ENCODE measurements at regions of chr11 and their contacts with region 1.

Region 1: DNA sequence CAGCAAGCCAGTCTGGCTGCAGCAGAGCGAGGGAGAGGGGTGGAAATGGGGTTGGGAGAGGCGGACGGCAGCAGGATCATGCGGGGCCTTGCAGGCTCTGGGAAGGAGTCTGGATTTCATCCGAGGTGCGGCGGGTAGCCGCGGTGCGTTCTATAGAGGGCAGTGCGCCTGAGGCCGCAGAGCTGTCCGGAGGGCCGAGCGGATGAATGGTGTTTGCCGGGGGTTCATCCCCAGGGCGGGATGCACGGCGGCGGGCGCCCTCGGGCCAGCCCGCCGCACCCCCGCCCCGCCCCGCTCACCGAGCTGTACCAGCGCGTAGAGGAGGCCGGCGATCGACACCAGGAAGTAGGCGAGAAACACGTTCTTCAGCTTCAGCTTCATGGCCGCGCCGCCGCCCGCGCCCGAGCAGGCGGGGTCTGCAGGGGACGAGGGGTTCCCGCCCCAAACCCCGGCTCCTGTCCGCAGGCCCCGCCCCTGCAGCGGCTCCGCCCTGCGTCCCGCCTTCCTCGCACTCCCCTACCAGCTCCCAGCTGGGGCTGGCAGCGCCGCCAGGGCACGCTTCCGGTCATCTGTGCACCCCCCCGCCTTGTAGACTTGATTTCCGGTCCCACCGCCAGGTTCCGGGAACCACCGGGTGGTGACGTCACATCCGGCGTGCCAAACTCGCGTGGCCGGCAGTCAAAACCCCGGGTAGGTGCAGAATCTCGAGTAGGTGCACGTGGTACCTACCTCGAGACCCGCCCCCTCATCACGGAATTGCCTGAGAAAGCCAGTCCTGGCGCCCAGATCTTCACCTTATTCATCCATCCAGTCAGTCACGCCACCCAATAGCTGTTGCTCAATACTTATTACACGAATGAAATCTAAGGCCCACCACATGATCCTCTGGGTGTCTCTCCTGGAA is at the start of gene B3GAT3:
- DNase-seq: peak; percentile 98
- ATAC-seq: peak; percentile 98
- H3K4me3 ChIP-seq: peak within 1 kb of the TSS; percentile 84
- H3K27ac ChIP-seq: peak within 1 kb of the TSS; percentile 81
- H3K4me1 ChIP-seq: 0 out of 2 replicates have a peak, but pooled peaks cover 4% of the 10 kb centered on the region
- H3K27me3 ChIP-seq: no peaks in the 10 kb centered on the region
- CTCF ChIP-seq: no peak
- EP300 ChIP-seq: peak in 1 of 2 experiments; percentile 27; a peak in 1 of 4 replicates
- POLR2A ChIP-seq: peak; percentile 84
- RAD21 ChIP-seq: no peak
- polyA plus RNA-seq, gene B3GAT3: 0.31 to 2.8 TPM

Region 2: DNA sequence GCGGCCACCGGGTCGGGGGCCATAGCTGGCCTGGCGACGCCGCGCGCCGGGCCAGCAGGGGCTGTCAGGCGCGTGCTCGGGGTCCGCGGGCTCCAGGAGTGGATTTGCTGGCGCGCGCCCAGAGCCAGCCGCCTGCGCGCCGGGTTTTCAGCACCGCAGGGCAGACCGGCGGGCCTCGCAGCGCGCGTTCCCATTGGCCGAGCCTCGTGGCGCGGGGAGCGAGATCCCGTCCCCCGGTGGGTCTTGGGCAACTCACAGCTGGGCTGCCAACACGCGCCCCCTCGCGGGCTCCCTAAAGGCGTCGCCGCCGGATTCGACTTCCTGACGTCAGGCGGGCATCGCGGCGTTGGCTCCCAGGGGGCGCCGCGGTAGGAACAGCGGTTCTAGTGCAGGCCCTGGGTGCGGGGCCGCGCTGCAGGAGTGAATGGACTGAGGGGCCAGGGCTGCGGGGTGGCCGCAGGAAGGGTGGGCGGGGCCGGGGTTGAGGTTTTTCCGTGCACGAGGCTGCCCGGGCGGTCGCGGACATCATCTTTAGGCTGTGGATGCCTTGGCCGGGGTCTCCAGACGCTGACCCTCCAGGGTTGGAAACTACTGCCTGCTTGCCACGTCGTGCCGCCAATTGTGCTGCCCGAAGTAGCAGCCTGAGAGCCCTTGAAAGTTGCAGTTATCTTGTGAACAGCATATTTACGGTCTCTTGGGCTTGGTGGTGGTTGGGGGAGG is 804.9 kb before region 1 on chr11 and contains the start of gene FADS1:
- CTCF ChIA-PET with region 1: no interaction called
- POLR2A ChIA-PET with region 1: no interaction called
- RAD21 ChIA-PET with region 1: no interaction called
- SMC1A ChIA-PET with region 1: no interaction called
- in situ Hi-C with region 1: no loop called
- intact Hi-C with region 1: no loop called
- DNase-seq: peak; percentile 60
- ATAC-seq: peak; percentile 71
- H3K4me3 ChIP-seq: peak within 1 kb of the TSS; percentile 81
- H3K27ac ChIP-seq: peak within 1 kb of the TSS; percentile 87
- H3K4me1 ChIP-seq: peaks cover 3% of the 10 kb centered on the region; the same call in 1 of the 2 replicates
- H3K27me3 ChIP-seq: no peaks in the 10 kb centered on the region
- CTCF ChIP-seq: peak; percentile 53 to 73 (median 69)
- EP300 ChIP-seq: no peak
- POLR2A ChIP-seq: peak; percentile 60
- RAD21 ChIP-seq: no peak
- polyA plus RNA-seq, gene FADS1: 8.8 to 14.6 TPM

Region 3: GRCh38 chr11:62645956-62646824 is 24.4 kb after region 1 on chr11 and contains the start of gene GANAB:
- CTCF ChIA-PET with region 1: interaction called, 3 read pairs
- POLR2A ChIA-PET with region 1: interaction called, 9 read pairs
- RAD21 ChIA-PET with region 1: interaction called, 3 read pairs
- SMC1A ChIA-PET with region 1: interaction called, 3 read pairs
- in situ Hi-C with region 1: no loop called
- intact Hi-C with region 1: loop called (anchors 2 kb)
- DNase-seq: peak; percentile 82
- ATAC-seq: peak; percentile 99
- H3K4me3 ChIP-seq: peak within 1 kb of the TSS; percentile 98
- H3K27ac ChIP-seq: peak within 1 kb of the TSS; percentile 93
- H3K4me1 ChIP-seq: peaks cover 4% of the 10 kb centered on the region; the same call in 1 of the 2 replicates
- H3K27me3 ChIP-seq: no peaks in the 10 kb centered on the region
- CTCF ChIP-seq: no peak
- EP300 ChIP-seq: no peak
- POLR2A ChIP-seq: peak; percentile 94
- RAD21 ChIP-seq: no peak
- polyA plus RNA-seq, gene GANAB: 4.5 to 6.4 TPM

Region 4: GRCh38 chr11:62671575-62672389 is 50.0 kb after region 1 on chr11 and contains the starts of genes LBHD1 and UQCC3:
- CTCF ChIA-PET with region 1: no interaction called
- POLR2A ChIA-PET with region 1: interaction called, 50 read pairs
- RAD21 ChIA-PET with region 1: interaction called, 8 read pairs
- SMC1A ChIA-PET with region 1: interaction called, 3 read pairs
- in situ Hi-C with region 1: no loop called
- intact Hi-C with region 1: no loop called
- DNase-seq: no peak
- ATAC-seq: peak; percentile 89
- H3K4me3 ChIP-seq: peak within 1 kb of the TSS; percentile 88
- H3K27ac ChIP-seq: peak within 1 kb of the TSS; percentile 75
- H3K4me1 ChIP-seq: peaks cover 19% of the 10 kb centered on the region
- H3K27me3 ChIP-seq: no peaks in the 10 kb centered on the region
- CTCF ChIP-seq: no peak
- EP300 ChIP-seq: no peak
- POLR2A ChIP-seq: peak; percentile 82
- RAD21 ChIP-seq: no peak
- polyA plus RNA-seq, gene LBHD1: 0.79 to 2.4 TPM
- polyA plus RNA-seq, gene UQCC3: 2.0 to 4.6 TPM

Measured in GM12878 (cell line).